ENCODE measurements at regions of chr16 and their contacts with region 1.

Region 1: GRCh38 chr16:66521951-66522771 is 27.8 kb downstream of the TK2 start:
- DNase-seq: peak; percentile 81
- H3K4me3 ChIP-seq: no peak overlapping the region
- H3K27ac ChIP-seq: peak overlapping the region; percentile 62
- H3K4me1 ChIP-seq: peaks cover 72% of the 10 kb centered on the region
- H3K27me3 ChIP-seq: no peaks in the 10 kb centered on the region
- CTCF ChIP-seq: no peak
- POLR2A ChIP-seq: no peak

Region 2: GRCh38 chr16:66444049-66444481 is 78.1 kb before region 1 on chr16:
- CTCF ChIA-PET with region 1: no interaction called
- POLR2A ChIA-PET with region 1: no interaction called
- dilution Hi-C with region 1: no loop called
- intact Hi-C with region 1: no loop called
- DNase-seq: no peak
- H3K4me3 ChIP-seq: no peak overlapping the region
- H3K27ac ChIP-seq: no peak overlapping the region
- H3K4me1 ChIP-seq: no peaks in the 10 kb centered on the region
- H3K27me3 ChIP-seq: peaks cover 7 to 26% of the 10 kb centered on the region in 2 experiments
- CTCF ChIP-seq: no peak
- POLR2A ChIP-seq: no peak

Region 3: GRCh38 chr16:66511615-66512500 is 10.3 kb before region 1 on chr16:
- CTCF ChIA-PET with region 1: interaction called, 10 read pairs
- POLR2A ChIA-PET with region 1: no interaction called
- dilution Hi-C with region 1: no loop called
- intact Hi-C with region 1: no loop called
- DNase-seq: peak; percentile 70
- H3K4me3 ChIP-seq: no peak overlapping the region
- H3K27ac ChIP-seq: peak overlapping the region; percentile 86
- H3K4me1 ChIP-seq: peaks cover 58% of the 10 kb centered on the region
- H3K27me3 ChIP-seq: no peaks in the 10 kb centered on the region
- CTCF ChIP-seq: no peak
- POLR2A ChIP-seq: no peak

Region 4: DNA sequence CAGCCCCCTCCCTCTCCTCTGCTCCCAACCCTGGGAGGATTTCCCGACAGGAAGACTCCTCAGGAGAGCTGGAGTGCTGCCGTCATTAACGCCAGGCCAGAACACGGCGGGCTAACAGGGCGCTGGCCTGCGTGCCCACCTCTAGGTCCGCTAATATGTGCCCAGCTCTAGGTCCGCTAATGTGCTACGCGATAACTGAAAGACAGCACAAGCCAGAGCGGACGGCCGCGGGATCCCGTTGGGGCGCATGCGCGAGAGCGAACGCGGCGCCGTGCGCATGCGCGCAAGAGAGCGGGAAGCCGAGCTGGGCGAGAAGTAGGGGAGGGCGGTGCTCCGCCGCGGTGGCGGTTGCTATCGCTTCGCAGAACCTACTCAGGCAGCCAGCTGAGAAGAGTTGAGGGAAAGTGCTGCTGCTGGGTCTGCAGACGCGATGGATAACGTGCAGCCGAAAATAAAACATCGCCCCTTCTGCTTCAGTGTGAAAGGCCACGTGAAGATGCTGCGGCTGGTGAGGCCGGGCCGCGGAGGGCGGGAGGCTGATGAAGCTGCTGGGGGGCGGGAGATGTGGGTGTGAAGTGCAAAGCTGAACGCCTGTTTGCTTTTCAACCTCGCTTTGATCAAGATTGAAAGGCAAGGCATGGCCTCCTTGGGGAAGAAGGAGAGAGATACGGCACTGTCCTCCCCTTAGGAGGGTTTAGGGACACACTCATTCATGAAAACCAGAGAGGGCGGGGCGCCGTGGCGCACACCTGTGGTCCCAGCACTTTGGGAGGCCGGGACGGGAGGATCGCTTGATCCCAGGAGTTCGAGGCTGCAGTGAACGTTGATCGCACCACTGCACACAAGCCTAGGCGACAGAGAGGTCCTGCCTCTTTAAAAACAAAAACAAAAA is 30.4 kb after region 1 on chr16 and contains the start of gene CKLF:
- CTCF ChIA-PET with region 1: interaction called, 6 read pairs
- POLR2A ChIA-PET with region 1: no interaction called
- dilution Hi-C with region 1: no loop called
- intact Hi-C with region 1: loop called (anchors 1 kb)
- DNase-seq: peak; percentile 96
- H3K4me3 ChIP-seq: peak within 1 kb of the TSS; percentile 13 to 65 (median 57)
- H3K27ac ChIP-seq: peak within 1 kb of the TSS; percentile 65
- H3K4me1 ChIP-seq: peaks cover 32% of the 10 kb centered on the region
- H3K27me3 ChIP-seq: no peaks in the 10 kb centered on the region
- CTCF ChIP-seq: no peak
- POLR2A ChIP-seq: peak; percentile 83
- total RNA-seq, gene CKLF: 80.0 and 93.4 TPM in 2 replicates

Region 5: DNA sequence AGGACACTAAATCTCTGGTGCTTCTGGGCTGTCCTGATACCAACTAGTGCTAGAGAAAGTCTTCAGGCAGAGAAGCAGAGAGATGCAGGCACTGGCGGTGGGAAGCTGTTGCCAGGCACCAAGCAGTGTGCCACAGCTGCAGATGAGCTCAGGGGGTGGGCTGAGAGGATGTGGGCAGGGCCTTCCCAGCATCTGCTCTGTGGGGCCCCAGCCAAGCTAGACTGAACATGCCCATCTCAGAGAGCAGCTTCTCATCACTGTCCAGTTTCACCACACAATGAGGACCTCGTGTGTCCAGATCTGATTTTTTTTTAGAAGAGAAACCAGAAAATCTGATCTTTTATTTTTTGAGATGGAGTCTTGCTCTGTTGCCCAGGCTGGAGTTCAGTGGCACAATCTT is 1388.0 kb after region 1 on chr16:
- CTCF ChIA-PET with region 1: no interaction called
- POLR2A ChIA-PET with region 1: no interaction called
- dilution Hi-C with region 1: no loop called
- intact Hi-C with region 1: no loop called
- DNase-seq: no peak
- H3K4me3 ChIP-seq: no peak overlapping the region
- H3K27ac ChIP-seq: no peak overlapping the region
- H3K4me1 ChIP-seq: no peaks in the 10 kb centered on the region
- H3K27me3 ChIP-seq: no peaks in the 10 kb centered on the region
- CTCF ChIP-seq: no peak
- POLR2A ChIP-seq: no peak